Left cardiac atrium (tissue), 4 donors: ENCODE measurements at regions of chr4 and their contacts with region 1.

Region 1: DNA sequence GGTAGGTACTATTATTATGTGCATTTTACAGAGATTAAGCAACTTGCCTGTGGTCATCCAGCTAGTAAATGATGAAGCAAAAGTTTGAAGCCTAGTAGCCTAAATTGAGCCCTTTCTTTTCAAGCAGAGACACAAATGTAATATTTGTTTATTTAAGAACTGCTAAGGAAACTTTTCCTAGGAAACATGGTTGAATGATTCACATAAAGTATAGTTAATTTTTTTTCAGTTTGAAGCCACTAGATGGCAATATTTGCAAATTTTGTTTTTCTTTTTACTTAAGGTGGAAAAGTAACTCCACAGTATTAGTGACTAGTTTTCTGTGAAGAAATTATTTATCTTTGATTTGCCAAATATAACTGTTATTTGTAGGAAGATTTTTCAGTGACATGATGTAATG is 52.8 kb upstream of the ANKRD17 start:
- DNase-seq: no peak
- ATAC-seq: no peak

Region 2: DNA sequence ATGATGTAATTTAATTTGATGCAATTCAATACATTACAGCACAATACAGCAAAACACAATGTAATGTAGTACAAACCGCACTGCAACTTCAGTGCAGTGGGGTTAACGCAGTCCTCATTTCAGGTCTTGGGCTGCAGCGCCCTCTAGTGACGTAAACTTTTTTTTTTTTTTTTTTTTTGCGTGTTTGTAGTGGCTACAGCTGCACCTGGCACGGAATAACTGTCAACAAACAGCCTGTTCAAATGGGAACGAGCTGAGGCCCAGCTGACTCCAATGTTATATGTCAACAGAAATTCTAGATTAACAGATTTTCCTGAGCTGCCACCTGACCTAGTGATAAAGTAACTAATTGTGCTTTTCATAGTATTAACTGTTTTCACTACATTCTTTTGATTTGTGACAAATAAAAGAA is 342.3 kb after region 1 on chr4:
- intact Hi-C with region 1: loop called in 1 of 2 experiments (anchors 5 kb)
- DNase-seq: no peak
- ATAC-seq: peak; percentile 74 to 78